Right ventricle myocardium superior (tissue), 1 donor: ENCODE measurements at regions of chr15 and their contacts with region 1.

Region 1: GRCh38 chr15:64430000-64430735 is 30.2 kb upstream of the ZNF609 start:
- DNase-seq: no peak
- ATAC-seq: peak; percentile 91

Region 2: GRCh38 chr15:64333986-64334929 is 95.9 kb before region 1 on chr15:
- intact Hi-C with region 1: no loop called
- DNase-seq: no peak
- ATAC-seq: no peak

Region 3: DNA sequence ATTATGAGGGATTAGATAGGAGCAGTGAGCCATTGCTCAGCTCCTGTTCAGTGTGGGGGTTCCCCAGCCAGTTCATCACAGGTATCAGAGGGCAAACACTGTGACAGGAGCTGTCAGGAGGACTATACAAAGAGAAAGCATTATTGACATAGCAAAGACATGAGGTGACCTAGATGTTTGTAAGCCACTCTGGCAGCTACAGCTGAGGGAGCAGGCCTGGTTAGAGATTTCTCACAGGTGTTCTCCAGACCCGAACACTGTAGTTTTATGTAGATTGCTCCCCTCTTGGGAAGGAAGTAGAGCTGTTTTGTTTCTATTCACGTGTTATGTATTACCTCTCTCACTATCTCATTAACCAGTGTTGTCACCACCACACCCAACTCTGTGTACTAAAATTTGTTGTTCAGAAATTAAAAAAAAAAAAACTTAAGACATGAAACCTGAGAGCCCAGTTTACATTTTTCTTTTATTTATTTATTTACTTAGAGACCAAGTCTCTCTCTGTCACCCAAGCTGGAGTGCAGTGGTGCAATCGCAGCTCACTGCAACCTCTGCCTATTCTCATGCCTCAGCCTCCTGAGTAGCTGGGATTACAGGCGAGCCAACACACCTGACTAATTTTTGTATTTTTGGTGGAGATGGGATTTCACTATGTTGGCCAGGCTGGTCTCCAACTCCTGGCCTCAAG is 221.5 kb after region 1 on chr15:
- intact Hi-C with region 1: loop called (anchors 10 kb)
- DNase-seq: no peak
- ATAC-seq: peak; percentile 34